ENCODE measurements at regions of chr5 and their contacts with region 1.

Region 1: GRCh38 chr5:39547553-39548154 is 122.9 kb upstream of the DAB2 start:
- H3K4me3 ChIP-seq: no peak overlapping the region
- H3K27ac ChIP-seq: no peak overlapping the region
- H3K4me1 ChIP-seq: no peaks in the 10 kb centered on the region
- CTCF ChIP-seq: peak; percentile 35; the same call in 1 of the 2 replicates

Region 2: DNA sequence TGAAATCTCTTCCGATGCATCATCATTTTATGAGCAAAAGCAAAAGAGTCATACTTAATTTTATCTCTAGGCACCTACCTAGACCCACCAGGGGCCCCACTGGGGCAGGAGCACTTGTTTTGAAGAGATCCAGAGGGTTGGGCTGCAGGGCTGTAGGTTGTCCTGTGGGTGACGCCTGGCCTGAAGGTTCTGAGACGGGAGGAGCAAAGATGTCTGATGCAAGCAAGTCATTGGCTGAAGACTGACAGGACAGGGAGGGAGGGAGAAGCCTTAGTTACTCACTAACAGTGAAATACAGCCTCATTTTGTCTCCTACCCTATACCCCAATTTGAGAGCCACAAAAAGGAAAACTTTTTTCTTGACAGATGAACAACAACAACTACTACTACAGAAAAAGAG is 166.3 kb before region 1 on chr5:
- CTCF ChIA-PET with region 1: interaction called, 137 read pairs
- POLR2A ChIA-PET with region 1: interaction called, 8 read pairs
- H3K4me3 ChIP-seq: no peak overlapping the region
- H3K27ac ChIP-seq: no peak overlapping the region
- H3K4me1 ChIP-seq: no peaks in the 10 kb centered on the region
- CTCF ChIP-seq: no peak

Region 3: GRCh38 chr5:39424736-39425637 is 122.7 kb before region 1 on chr5 and contains the start of gene DAB2:
- CTCF ChIA-PET with region 1: interaction called, 25 read pairs
- POLR2A ChIA-PET with region 1: interaction called, 4 read pairs
- H3K4me3 ChIP-seq: peak within 1 kb of the TSS; percentile 64
- H3K27ac ChIP-seq: peak within 1 kb of the TSS; percentile 74
- H3K4me1 ChIP-seq: peaks cover 9% of the 10 kb centered on the region; the same call in 1 of the 2 replicates
- CTCF ChIP-seq: peak; percentile 97

Region 4: GRCh38 chr5:39513236-39513635 is 34.4 kb before region 1 on chr5:
- CTCF ChIA-PET with region 1: no interaction called
- POLR2A ChIA-PET with region 1: no interaction called
- H3K4me3 ChIP-seq: no peak overlapping the region
- H3K27ac ChIP-seq: no peak overlapping the region
- H3K4me1 ChIP-seq: no peaks in the 10 kb centered on the region
- CTCF ChIP-seq: no peak

Region 5: DNA sequence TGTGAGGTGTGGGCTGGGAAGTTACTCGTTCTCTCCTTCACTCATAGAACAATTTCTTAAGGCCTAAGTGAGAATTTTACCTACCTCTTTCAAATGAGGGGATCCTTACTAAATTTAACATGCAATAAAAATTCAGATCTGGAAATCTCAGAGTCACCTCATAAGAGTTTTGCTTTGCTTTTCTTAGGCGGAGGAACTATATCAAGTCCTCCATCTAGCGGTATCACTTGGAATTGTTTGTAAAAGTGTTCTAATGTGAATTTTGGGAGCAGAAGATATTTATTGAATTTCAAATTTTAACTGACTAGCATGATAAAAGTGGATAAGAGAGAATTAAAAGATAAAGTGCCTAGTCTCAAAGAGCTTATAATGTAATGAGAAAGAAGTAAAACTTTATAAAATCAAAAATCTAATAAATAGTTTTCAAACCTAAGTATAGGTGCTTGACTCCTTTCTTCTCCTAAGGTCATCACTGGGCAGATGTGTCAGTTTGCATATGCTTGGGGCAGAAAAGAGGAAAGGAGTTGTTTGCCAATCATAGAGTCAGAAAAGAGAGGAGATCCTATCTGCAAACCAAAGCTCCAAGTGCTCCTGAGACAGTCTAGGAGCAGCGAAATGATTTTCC is 22.9 kb after region 1 on chr5:
- CTCF ChIA-PET with region 1: interaction called, 13 read pairs
- POLR2A ChIA-PET with region 1: no interaction called
- H3K4me3 ChIP-seq: no peak overlapping the region
- H3K27ac ChIP-seq: no peak overlapping the region
- H3K4me1 ChIP-seq: no peaks in the 10 kb centered on the region
- CTCF ChIP-seq: no peak

Region 6: DNA sequence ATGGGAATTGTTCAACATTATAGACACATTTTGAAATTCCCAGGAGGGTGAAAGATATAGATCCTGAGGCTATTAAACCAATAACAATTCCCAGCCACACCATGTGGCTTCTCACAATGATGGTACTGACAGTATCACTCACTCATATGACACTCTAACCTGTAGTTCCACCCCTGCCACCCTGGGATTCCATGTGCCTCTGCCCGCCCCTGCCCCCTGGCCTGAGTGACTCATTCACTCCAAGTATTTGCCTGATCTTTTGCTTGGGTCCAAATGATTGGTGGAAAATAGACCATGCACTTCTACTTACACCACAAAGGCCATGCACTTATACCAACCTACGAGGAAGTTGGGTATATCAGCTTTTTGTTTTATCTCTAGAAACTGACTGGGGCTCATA is 182.4 kb after region 1 on chr5:
- CTCF ChIA-PET with region 1: no interaction called
- POLR2A ChIA-PET with region 1: no interaction called
- H3K4me3 ChIP-seq: no peak overlapping the region
- H3K27ac ChIP-seq: no peak overlapping the region
- H3K4me1 ChIP-seq: no peaks in the 10 kb centered on the region
- CTCF ChIP-seq: no peak